ENCODE measurements at regions of chr4 and their contacts with region 1.

Region 1: GRCh38 chr4:174702979-174703478 is 126.0 kb downstream of the GLRA3 start:
- DNase-seq: no peak
- H3K4me3 Mint-ChIP-seq: no peak overlapping the region
- H3K27ac Mint-ChIP-seq: no peak overlapping the region
- H3K4me1 Mint-ChIP-seq: no peaks in the 10 kb centered on the region
- H3K27me3 Mint-ChIP-seq: peaks cover 3% of the 10 kb centered on the region

Region 2: GRCh38 chr4:174749091-174749490 is 46.1 kb after region 1 on chr4:
- intact Hi-C with region 1: no loop called
- DNase-seq: no peak
- H3K4me3 Mint-ChIP-seq: no peak overlapping the region
- H3K27ac Mint-ChIP-seq: no peak overlapping the region
- H3K4me1 Mint-ChIP-seq: no peaks in the 10 kb centered on the region
- H3K27me3 Mint-ChIP-seq: no peaks in the 10 kb centered on the region

Region 3: GRCh38 chr4:174789666-174790065 is 86.6 kb after region 1 on chr4:
- intact Hi-C with region 1: no loop called
- DNase-seq: no peak
- H3K4me3 Mint-ChIP-seq: no peak overlapping the region
- H3K27ac Mint-ChIP-seq: no peak overlapping the region
- H3K4me1 Mint-ChIP-seq: no peaks in the 10 kb centered on the region
- H3K27me3 Mint-ChIP-seq: no peaks in the 10 kb centered on the region

Region 4: DNA sequence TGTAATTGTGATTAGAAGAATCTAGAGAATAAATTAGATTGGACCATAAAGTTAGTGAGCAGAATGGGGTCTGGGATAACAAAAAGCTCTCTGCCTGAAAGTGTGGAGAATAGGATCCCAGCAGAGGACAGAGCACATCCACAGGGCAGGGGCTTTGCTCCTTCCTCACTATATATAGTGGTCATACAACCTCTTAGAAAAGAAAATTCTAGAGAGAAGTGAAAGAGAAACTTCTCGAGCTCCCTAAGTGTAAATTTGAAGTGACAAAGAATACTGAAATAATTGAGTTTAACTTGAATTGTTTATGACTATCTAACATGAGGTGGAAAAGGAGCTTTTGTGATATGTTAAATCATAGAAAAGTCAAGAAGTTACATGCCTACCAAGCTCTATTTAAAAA is 230.1 kb after region 1 on chr4:
- intact Hi-C with region 1: no loop called
- DNase-seq: no peak
- H3K4me3 Mint-ChIP-seq: no peak overlapping the region
- H3K27ac Mint-ChIP-seq: no peak overlapping the region
- H3K4me1 Mint-ChIP-seq: no peaks in the 10 kb centered on the region
- H3K27me3 Mint-ChIP-seq: no peaks in the 10 kb centered on the region

Region 5: GRCh38 chr4:175435381-175435783 is 732.4 kb after region 1 on chr4:
- intact Hi-C with region 1: loop called (anchors 5 kb)
- DNase-seq: no peak
- H3K4me3 Mint-ChIP-seq: no peak overlapping the region
- H3K27ac Mint-ChIP-seq: no peak overlapping the region
- H3K4me1 Mint-ChIP-seq: no peaks in the 10 kb centered on the region
- H3K27me3 Mint-ChIP-seq: no peaks in the 10 kb centered on the region

Measured in activated T-helper 1 cell treated with anti-CD3 and anti-CD28 coated beads, Interleukin-12 subunit alpha, Interleukin-12 subunit beta, Interleukin-2, Interleukin-4 antibody, amounts not matched to agents 30 ng/mL and 10 ng/mL and 1 ng/mL, durations not matched to agents 14 hours and 24 hours and 36 hours (primary cell).